ENCODE measurements at regions of chr17 and their contacts with region 1.

Region 1: DNA sequence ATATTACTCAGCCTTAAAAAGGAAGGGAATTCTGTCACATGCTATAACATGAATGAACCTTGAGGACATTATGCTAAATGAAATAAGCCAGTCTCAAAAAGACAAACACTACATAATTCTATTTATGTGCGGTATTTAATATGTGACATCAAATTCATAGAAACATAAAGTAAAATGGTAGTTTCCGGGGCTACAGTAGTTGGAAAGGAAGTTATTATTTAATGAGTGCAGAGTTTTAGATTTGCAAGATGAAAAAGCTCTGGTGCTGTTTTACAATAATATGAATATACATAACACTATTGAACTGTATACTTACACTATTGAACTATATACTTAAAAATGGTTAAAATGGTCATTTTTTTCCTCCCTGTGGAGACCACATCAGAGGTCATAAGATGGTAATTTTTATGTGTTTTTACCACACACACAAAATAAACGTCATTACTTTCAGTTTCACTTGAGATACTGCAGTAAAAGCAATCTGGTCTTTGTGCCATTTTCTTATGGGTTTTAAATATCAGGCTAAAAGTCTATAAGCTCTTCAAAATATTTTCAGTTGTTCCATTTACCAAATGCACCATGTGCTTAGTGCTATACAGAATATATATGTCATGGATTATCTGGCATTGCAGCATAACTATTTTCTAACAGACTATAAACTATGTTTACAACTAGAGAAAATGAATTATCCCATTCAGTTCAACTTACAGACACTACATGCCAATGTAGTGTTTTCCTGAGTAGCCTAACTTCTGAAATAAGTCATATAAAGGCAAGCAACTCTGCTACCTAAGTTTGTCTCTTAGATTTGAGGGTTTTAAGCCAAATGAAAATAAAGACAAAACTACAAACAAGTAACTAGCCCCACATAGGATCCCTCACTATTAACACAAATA is 90.9 kb downstream of the SPAG9 start:
- DNase-seq: peak; percentile 24 to 27 (median 27)
- H3K4me3 ChIP-seq: peak overlapping the region; percentile 14 to 56 (median 27)
- H3K4me3 Mint-ChIP-seq: peak overlapping the region; percentile 58 to 77
- H3K27ac ChIP-seq: peak overlapping the region in 1 of 2 donors; percentile 68
- H3K27ac Mint-ChIP-seq: peak overlapping the region; percentile 78 to 88 (median 85)
- H3K4me1 ChIP-seq: peaks cover 3 to 17% of the 10 kb centered on the region in 2 donors
- H3K4me1 Mint-ChIP-seq: peaks cover 20% of the 10 kb centered on the region
- H3K27me3 ChIP-seq: no peaks in the 10 kb centered on the region
- H3K27me3 Mint-ChIP-seq: no peaks in the 10 kb centered on the region
- CTCF ChIP-seq: no peak

Region 2: GRCh38 chr17:51064061-51064735 is 34.4 kb after region 1 on chr17:
- intact Hi-C with region 1: loop called in 1 of 2 experiments (anchors 5 kb)
- DNase-seq: no peak
- H3K4me3 ChIP-seq: no peak overlapping the region
- H3K4me3 Mint-ChIP-seq: no peak overlapping the region
- H3K27ac ChIP-seq: no peak overlapping the region
- H3K27ac Mint-ChIP-seq: no peak overlapping the region
- H3K4me1 ChIP-seq: no peaks in the 10 kb centered on the region
- H3K4me1 Mint-ChIP-seq: peaks cover 8% of the 10 kb centered on the region
- H3K27me3 ChIP-seq: no peaks in the 10 kb centered on the region
- H3K27me3 Mint-ChIP-seq: peaks cover 0 to 1% (median 0%) of the 10 kb centered on the region in 3 donors
- CTCF ChIP-seq: no peak